Ovary (tissue), 10 donors: ENCODE measurements at regions of chr7 and their contacts with region 1.

Region 1: GRCh38 chr7:151448261-151449252 is 8.6 kb upstream of the CRYGN start:
- DNase-seq: peak; percentile 70 to 86 (median 79)
- H3K4me3 ChIP-seq: peak overlapping the region; percentile 52
- H3K27ac ChIP-seq: peak overlapping the region; percentile 0 to 64
- H3K4me1 ChIP-seq: peaks cover 1% of the 10 kb centered on the region
- H3K27me3 ChIP-seq: no peaks in the 10 kb centered on the region
- CTCF ChIP-seq: peak; percentile 70 to 86 (median 86)
- EP300 ChIP-seq: no peak
- POLR2A ChIP-seq: no peak

Region 2: GRCh38 chr7:151368136-151368571 is 80.4 kb before region 1 on chr7:
- intact Hi-C with region 1: loop called (anchors 1 to 5 kb)
- DNase-seq: peak; percentile 81 to 89 (median 84)
- H3K4me3 ChIP-seq: no peak overlapping the region
- H3K27ac ChIP-seq: no peak overlapping the region
- H3K4me1 ChIP-seq: no peaks in the 10 kb centered on the region
- H3K27me3 ChIP-seq: no peaks in the 10 kb centered on the region
- CTCF ChIP-seq: peak; percentile 59 to 93 (median 87)
- EP300 ChIP-seq: no peak
- POLR2A ChIP-seq: no peak

Region 3: DNA sequence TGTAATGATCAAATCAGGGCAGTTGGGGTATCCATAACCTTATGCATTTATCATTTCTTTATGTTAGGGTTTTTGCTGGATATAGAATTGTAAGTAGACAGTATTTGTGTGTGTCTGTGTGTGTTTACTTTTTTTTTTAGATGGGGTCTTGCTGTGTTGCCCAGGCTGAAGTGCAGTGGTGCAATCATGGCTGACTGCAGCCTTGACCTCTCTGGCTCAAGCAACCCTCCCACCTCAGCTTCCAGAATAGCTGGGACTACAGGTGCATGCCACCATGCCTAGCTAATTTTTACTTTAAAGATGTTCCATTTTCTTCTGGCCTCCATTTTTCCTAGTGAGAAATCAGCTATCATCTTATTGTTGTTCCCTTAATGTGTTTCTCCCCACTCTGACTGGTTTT is 81.3 kb after region 1 on chr7:
- intact Hi-C with region 1: no loop called
- DNase-seq: no peak
- H3K4me3 ChIP-seq: no peak overlapping the region
- H3K27ac ChIP-seq: no peak overlapping the region
- H3K4me1 ChIP-seq: no peaks in the 10 kb centered on the region
- H3K27me3 ChIP-seq: no peaks in the 10 kb centered on the region
- CTCF ChIP-seq: no peak
- EP300 ChIP-seq: no peak
- POLR2A ChIP-seq: no peak

Region 4: DNA sequence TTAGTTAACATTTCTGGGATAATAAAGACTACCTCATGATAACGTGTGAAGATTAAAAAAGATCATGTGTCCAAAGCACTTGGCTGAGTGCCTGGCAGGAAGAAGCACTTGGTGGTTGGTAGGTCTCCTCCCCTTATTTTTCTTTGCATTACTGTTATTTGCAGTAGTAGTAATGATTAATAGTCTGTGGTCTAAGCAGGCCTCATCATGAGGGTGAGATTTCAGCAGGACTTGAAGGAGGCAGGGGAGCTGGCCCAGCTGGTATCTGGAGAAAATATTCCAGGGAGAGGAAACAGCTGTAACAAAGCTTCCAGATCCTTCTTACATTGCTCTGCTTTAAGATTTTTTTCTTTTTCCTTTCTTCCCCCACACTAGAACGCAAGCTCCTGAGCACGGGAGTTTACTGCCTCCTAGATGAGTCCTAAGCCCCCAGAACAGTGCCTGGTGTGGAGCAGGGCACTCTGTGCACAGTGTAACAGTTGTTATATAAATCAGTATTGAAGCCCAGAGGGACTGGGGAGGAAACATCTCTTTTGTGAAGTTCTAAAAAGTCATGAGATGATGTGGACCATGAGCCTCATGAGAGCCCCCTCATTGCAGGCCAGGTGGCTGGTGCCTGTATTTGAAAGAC is 102.2 kb after region 1 on chr7:
- intact Hi-C with region 1: no loop called
- DNase-seq: no peak
- H3K4me3 ChIP-seq: no peak overlapping the region
- H3K27ac ChIP-seq: no peak overlapping the region
- H3K4me1 ChIP-seq: no peaks in the 10 kb centered on the region
- H3K27me3 ChIP-seq: no peaks in the 10 kb centered on the region
- CTCF ChIP-seq: no peak
- EP300 ChIP-seq: no peak
- POLR2A ChIP-seq: no peak

Region 5: GRCh38 chr7:152382244-152382643 is 933.7 kb after region 1 on chr7:
- intact Hi-C with region 1: no loop called
- DNase-seq: no peak
- H3K4me3 ChIP-seq: no peak overlapping the region
- H3K27ac ChIP-seq: no peak overlapping the region
- H3K4me1 ChIP-seq: peaks cover 7% of the 10 kb centered on the region
- H3K27me3 ChIP-seq: no peaks in the 10 kb centered on the region
- CTCF ChIP-seq: no peak
- EP300 ChIP-seq: no peak
- POLR2A ChIP-seq: no peak